ENCODE measurements at regions of chr3 and their contacts with region 1.

Region 1: GRCh38 chr3:157618075-157618760 is 115.0 kb upstream of the VEPH1 start:
- DNase-seq: no peak
- ATAC-seq: peak; percentile 41 to 66
- H3K4me3 ChIP-seq: no peak overlapping the region
- H3K27ac ChIP-seq: no peak overlapping the region
- H3K4me1 ChIP-seq: no peaks in the 10 kb centered on the region
- H3K27me3 ChIP-seq: no peaks in the 10 kb centered on the region
- CTCF ChIP-seq: peak; percentile 30 to 80 (median 57)
- POLR2A ChIP-seq: no peak

Region 2: DNA sequence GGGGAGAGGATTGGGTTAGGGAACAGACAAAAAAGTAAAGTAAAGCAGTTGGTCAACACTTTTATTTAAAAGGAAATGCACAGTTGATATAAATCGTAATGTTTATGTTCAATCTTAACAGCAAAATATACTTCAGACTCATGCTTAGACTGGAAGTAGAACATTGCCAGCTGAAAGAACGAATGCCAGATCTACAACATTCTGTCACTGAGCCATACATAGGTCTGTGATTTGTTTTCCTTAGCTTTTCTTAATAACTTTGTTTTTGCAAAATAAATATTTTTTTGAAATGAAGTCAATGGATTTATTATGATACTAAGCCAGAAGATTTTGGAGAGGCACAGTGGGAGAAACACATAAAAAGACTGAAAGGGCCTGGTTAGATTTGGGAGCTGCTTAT is 730.0 kb before region 1 on chr3:
- in situ Hi-C with region 1: no loop called
- intact Hi-C with region 1: no loop called
- DNase-seq: no peak
- ATAC-seq: no peak
- H3K4me3 ChIP-seq: no peak overlapping the region
- H3K27ac ChIP-seq: no peak overlapping the region
- H3K4me1 ChIP-seq: no peaks in the 10 kb centered on the region
- H3K27me3 ChIP-seq: no peaks in the 10 kb centered on the region
- CTCF ChIP-seq: no peak
- POLR2A ChIP-seq: no peak

Region 3: DNA sequence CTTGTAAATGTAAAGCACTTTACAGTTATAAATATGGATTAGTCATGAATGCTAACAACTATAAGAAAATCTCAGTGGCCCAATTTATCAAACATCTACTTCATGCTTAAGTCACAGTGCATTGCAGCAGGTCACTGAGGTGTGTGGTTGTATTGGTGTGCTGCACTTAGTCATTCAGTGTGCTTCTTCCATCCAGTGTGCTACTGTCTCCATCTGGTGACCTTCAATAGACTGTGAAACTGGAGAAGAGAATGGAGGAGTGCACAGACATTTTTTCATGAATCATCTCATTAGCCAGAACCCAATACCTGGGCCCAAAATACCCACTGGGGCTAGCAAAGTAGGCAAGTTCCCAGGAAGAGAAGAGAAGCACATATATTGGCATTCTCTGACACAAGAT is 288.4 kb after region 1 on chr3:
- in situ Hi-C with region 1: loop called in 1 of 4 experiments (anchors 10 kb)
- intact Hi-C with region 1: loop called (anchors 5 kb)
- DNase-seq: no peak
- ATAC-seq: peak; percentile 60 to 75
- H3K4me3 ChIP-seq: no peak overlapping the region
- H3K27ac ChIP-seq: no peak overlapping the region
- H3K4me1 ChIP-seq: no peaks in the 10 kb centered on the region
- H3K27me3 ChIP-seq: no peaks in the 10 kb centered on the region
- CTCF ChIP-seq: peak in 3 of 5 experiments; percentile 8 to 38 (median 11)
- POLR2A ChIP-seq: no peak

Region 4: DNA sequence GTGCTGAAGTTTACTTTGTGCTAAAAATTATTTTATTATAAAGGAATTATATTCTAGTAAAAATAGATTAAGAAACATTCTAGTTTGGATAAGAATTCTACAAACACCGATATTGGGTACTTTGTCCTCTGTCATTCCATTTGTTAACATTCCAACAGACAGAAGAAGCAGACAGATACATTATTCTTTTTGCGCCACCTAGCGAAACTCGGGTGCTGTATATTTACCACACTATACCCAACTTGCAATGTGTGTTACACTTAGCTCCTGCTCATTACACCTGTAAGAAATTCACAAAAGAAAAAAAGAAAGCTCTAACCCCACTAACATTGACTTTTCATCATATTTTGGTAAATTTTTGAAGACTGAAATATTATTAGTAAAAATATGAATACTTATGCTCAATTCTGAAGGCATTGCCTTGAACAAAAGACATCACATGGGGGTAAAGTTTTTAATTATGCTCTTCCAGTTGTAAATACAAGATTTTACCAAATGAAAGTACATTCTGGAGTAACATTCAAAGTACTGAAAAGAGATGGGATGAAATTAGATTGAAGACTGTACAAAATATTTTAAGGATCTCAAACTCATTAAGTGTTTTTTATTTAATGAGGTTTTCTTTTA is 816.3 kb after region 1 on chr3:
- in situ Hi-C with region 1: loop called (anchors 5 to 10 kb)
- intact Hi-C with region 1: loop called (anchors 2 kb)
- DNase-seq: peak; percentile 4 to 34
- ATAC-seq: peak; percentile 66 to 83
- H3K4me3 ChIP-seq: no peak overlapping the region
- H3K27ac ChIP-seq: no peak overlapping the region
- H3K4me1 ChIP-seq: no peaks in the 10 kb centered on the region
- H3K27me3 ChIP-seq: no peaks in the 10 kb centered on the region
- CTCF ChIP-seq: peak; percentile 45 to 69 (median 50)
- POLR2A ChIP-seq: no peak

Region 5: GRCh38 chr3:158532099-158532734 is 914.0 kb after region 1 on chr3:
- in situ Hi-C with region 1: loop called in 2 of 4 experiments (anchors 25 kb)
- intact Hi-C with region 1: loop called (anchors 5 kb)
- DNase-seq: no peak
- ATAC-seq: peak in 1 of 2 donors; percentile 33
- H3K4me3 ChIP-seq: no peak overlapping the region
- H3K27ac ChIP-seq: no peak overlapping the region
- H3K4me1 ChIP-seq: no peaks in the 10 kb centered on the region
- H3K27me3 ChIP-seq: no peaks in the 10 kb centered on the region
- CTCF ChIP-seq: peak in 4 of 5 experiments; percentile 11 to 42 (median 24)
- POLR2A ChIP-seq: no peak